HAP-1 (cell line): ENCODE measurements at regions of chr16 and their contacts with region 1.

Region 1: GRCh38 chr16:46911038-46911437 is 26.9 kb downstream of the GPT2 start:
- DNase-seq: no peak
- H3K4me3 ChIP-seq: no peak overlapping the region
- H3K4me1 ChIP-seq: no peaks in the 10 kb centered on the region
- H3K27me3 ChIP-seq: no peaks in the 10 kb centered on the region

Region 2: DNA sequence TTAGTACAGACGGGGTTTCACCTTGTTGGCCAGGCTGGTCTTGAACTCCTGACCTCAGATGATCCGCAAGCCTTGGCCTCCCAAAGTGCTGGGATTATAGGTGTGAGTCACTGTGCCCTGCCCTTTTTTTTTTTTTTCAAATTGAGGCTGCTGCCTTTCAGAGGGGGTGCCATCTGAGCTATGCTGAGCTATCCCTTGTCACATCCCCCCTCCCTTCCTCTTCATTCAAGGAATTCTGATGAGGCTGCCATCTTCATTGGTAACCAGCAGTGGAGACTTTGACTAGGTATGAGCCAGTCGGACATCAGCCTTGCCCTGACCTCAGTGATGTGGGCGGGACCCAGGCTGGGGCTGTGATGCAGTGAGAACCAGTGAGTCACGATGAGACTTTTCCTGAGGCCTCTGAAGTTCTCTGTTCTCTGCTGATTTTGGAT is 51.3 kb before region 1 on chr16:
- in situ Hi-C with region 1: loop called (anchors 5 kb)
- DNase-seq: no peak
- H3K4me3 ChIP-seq: no peak overlapping the region
- H3K4me1 ChIP-seq: peaks cover 7% of the 10 kb centered on the region
- H3K27me3 ChIP-seq: no peaks in the 10 kb centered on the region